ENCODE measurements at regions of chr12 and their contacts with region 1.

Region 1: GRCh38 chr12:55715833-55716581 is at the start of gene BLOC1S1:
- DNase-seq: peak; percentile 95
- ATAC-seq: peak; percentile 95
- H3K4me3 Mint-ChIP-seq: peak within 1 kb of the TSS; percentile 97
- H3K27ac Mint-ChIP-seq: peak within 1 kb of the TSS; percentile 96
- H3K4me1 Mint-ChIP-seq: peaks cover 54% of the 10 kb centered on the region
- H3K27me3 Mint-ChIP-seq: peaks cover 17% of the 10 kb centered on the region
- total RNA-seq, gene BLOC1S1: 156 to 158 TPM

Region 2: GRCh38 chr12:55728939-55729823 is 13.2 kb after region 1 on chr12 and contains the start of gene CD63:
- CTCF ChIA-PET with region 1: interaction called, 170 read pairs
- POLR2A ChIA-PET with region 1: interaction called, 28 read pairs
- DNase-seq: peak; percentile 75
- ATAC-seq: peak; percentile 64
- H3K4me3 Mint-ChIP-seq: peak within 1 kb of the TSS; percentile 84
- H3K27ac Mint-ChIP-seq: peak within 1 kb of the TSS; percentile 93
- H3K4me1 Mint-ChIP-seq: peaks cover 59% of the 10 kb centered on the region
- H3K27me3 Mint-ChIP-seq: no peaks in the 10 kb centered on the region
- total RNA-seq, gene CD63: 203 to 206 TPM

Measured in activated CD8-positive, alpha-beta T cell treated with anti-CD3 and anti-CD28 coated beads, Interleukin-2, amount 10 ng/mL, durations not matched to agents 7 days and 5 days (primary cell).